Testis (tissue), 5 donors: ENCODE measurements at regions of chr19 and their contacts with region 1.

Region 1: GRCh38 chr19:11035441-11036377 is 53.6 kb upstream of the LDLR start:
- DNase-seq: peak; percentile 94
- H3K4me3 ChIP-seq: no peak overlapping the region
- H3K27ac ChIP-seq: peak overlapping the region in 1 of 2 donors; percentile 19
- H3K4me1 ChIP-seq: peaks cover 8% of the 10 kb centered on the region
- H3K27me3 ChIP-seq: no peaks in the 10 kb centered on the region
- CTCF ChIP-seq: peak; percentile 76 to 82 (median 81)
- POLR2A ChIP-seq: no peak

Region 2: DNA sequence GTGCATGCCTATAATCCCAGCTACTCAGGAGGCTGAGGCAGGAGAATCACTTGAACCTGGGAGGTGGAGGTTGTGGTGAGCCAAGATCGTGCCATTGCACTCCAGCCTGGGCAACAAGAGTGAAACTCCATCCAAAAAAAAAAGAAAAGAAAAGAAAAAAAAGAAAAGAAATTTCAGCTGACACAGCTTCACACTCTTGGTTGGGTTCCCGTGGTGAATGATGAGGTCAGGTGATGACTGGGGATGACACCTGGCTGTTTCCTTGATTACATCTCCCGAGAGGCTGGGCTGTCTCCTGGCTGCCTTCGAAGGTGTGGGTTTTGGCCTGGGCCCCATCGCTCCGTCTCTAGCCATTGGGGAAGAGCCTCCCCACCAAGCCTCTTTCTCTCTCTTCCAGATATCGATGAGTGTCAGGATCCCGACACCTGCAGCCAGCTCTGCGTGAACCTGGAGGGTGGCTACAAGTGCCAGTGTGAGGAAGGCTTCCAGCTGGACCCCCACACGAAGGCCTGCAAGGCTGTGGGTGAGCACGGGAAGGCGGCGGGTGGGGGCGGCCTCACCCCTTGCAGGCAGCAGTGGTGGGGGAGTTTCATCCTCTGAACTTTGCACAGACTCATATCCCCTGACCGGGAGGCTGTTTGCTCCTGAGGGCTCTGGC is 75.5 kb after region 1 on chr19:
- intact Hi-C with region 1: loop called (anchors 10 kb)
- DNase-seq: no peak
- H3K4me3 ChIP-seq: no peak overlapping the region
- H3K27ac ChIP-seq: no peak overlapping the region
- H3K4me1 ChIP-seq: no peaks in the 10 kb centered on the region
- H3K27me3 ChIP-seq: no peaks in the 10 kb centered on the region
- CTCF ChIP-seq: no peak
- POLR2A ChIP-seq: no peak

Region 3: DNA sequence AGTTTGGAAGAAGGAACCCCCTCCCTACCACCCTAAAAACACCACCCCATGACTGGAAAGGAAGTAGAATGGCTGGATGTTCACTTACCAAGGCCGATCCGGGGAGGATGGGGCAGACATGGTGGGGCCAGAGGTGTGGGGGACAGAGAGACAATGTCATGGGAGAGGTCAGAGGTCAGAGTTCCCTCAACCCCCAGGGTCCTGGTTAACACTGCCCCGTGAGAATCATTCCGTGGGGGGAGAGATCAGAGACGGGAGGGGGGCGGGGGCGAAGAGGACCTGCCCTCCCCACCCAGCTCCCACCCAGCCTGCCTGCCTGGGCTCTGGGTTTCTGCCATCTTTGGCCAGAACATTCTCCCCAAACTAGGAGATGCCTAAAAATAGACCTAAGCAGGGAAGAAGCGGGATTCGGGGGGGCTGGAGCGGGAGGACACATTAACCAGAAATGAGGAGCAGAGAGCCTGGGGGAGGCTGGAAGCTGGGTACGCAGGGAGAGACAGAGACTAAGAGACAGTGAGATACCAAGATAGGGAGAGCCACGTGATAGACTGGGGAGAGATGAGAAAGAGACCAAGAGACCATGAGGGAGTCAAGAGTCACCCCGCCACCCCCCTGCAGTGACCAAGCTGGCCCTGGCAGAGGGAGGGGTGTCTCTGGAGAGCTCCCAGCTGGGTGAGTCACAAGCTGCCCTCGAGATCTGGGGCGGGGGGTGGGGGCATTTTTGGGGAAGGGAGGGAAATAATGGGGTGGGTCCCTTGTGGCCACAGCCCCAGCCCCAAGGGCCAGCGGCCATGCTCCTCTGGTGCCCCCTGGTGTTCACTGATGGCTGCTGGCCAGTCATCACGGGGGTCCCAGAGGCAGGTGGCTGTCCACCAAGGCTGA is 167.7 kb after region 1 on chr19:
- intact Hi-C with region 1: loop called (anchors 5 kb)
- DNase-seq: peak; percentile 88
- H3K4me3 ChIP-seq: no peak overlapping the region
- H3K27ac ChIP-seq: peak overlapping the region; percentile 85 to 86
- H3K4me1 ChIP-seq: peaks cover 24% of the 10 kb centered on the region
- H3K27me3 ChIP-seq: no peaks in the 10 kb centered on the region
- CTCF ChIP-seq: peak; percentile 74 to 89 (median 80)
- POLR2A ChIP-seq: no peak